ENCODE measurements at regions of chr4 and their contacts with region 1.

Region 1: DNA sequence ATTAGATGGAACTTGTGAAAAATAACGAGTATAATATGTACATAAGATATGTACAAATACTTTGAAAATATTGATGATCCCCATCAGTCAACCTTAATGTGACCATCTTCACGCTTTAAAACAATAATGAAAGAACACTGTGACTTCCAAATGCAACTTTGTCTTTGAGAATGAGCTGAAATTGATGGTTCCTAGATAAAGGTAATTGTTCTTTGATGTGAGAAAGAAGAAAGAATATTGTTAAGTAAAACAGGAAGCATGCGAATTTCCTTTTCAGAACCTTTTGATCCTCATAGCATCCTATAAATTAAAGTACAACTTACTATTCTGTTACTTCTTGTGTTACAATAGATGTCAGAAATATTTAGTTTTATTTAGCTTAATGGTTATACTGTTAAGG is 22.2 kb downstream of the IL2 start:
- DNase-seq: no peak
- ATAC-seq: no peak
- H3K4me3 ChIP-seq: no peak overlapping the region
- H3K27ac ChIP-seq: no peak overlapping the region
- H3K4me1 ChIP-seq: no peaks in the 10 kb centered on the region
- H3K27me3 ChIP-seq: no peaks in the 10 kb centered on the region
- CTCF ChIP-seq: no peak

Region 2: DNA sequence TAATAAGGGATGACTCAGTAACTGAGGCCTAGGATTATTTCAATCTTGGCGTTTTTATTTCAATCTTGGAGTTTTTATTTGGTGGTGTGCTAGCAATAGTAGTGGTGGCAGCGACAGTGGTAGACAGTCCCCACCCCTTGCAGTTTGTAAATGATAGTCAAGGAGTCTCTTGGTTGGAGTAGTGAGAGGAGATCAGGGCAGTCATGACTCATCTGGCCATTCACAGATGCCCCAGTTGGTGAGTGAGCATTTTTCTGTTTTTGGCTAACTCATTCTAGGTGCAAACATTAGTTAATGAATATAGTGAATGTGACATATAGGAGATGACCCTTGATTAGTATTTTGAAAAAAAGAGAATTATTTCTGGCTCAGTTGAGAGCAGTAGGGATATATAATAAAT is 149.0 kb before region 1 on chr4:
- intact Hi-C with region 1: no loop called
- DNase-seq: no peak
- ATAC-seq: no peak
- H3K4me3 ChIP-seq: no peak overlapping the region
- H3K27ac ChIP-seq: no peak overlapping the region
- H3K4me1 ChIP-seq: no peaks in the 10 kb centered on the region
- H3K27me3 ChIP-seq: no peaks in the 10 kb centered on the region
- CTCF ChIP-seq: no peak

Region 3: GRCh38 chr4:122356317-122356808 is 77.9 kb before region 1 on chr4:
- intact Hi-C with region 1: no loop called
- DNase-seq: no peak
- ATAC-seq: no peak
- H3K4me3 ChIP-seq: no peak overlapping the region
- H3K27ac ChIP-seq: no peak overlapping the region
- H3K4me1 ChIP-seq: no peaks in the 10 kb centered on the region
- H3K27me3 ChIP-seq: no peaks in the 10 kb centered on the region
- CTCF ChIP-seq: no peak

Region 4: DNA sequence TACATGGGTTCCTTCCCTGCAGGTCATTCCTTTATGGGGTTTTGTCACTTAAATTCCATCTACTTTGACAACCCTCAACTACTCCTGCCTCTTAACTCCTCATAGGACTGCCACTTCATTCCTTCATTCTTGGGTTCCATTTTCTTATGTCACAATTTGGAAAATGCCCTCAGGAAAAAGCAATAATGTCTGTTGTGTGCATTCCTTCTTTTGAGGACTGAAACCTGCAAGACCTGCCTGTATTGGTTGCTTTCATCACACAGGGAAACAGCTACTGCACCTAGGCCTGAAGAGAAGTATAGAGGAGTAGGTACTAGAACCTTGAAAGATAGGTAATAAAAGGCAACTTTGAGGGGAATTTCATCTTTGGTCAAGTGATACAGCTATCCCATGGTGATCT is 14.7 kb after region 1 on chr4:
- intact Hi-C with region 1: no loop called
- DNase-seq: no peak
- ATAC-seq: no peak
- H3K4me3 ChIP-seq: no peak overlapping the region
- H3K27ac ChIP-seq: no peak overlapping the region
- H3K4me1 ChIP-seq: no peaks in the 10 kb centered on the region
- H3K27me3 ChIP-seq: no peaks in the 10 kb centered on the region
- CTCF ChIP-seq: no peak

Region 5: DNA sequence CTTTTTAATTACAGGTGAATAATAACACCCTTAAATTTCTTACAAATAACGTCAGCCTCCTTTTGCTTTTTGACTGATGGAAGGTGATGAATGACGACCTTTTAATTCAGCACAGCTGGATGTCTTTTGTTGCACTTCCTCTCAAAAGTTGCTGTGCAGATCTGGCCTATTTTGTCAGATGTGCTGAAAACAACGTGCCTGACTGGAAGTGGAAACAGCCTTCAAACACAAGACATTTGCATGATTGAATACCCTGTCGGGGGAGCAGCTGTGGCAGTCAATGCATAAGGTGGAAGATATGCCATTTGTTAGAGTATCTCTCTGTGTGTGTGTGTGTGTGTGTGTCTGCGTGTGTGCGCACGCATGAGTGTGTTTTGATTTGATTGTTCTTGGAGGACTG is 1542.0 kb after region 1 on chr4:
- intact Hi-C with region 1: loop called in 1 of 10 experiments (anchors 5 kb)
- DNase-seq: no peak
- ATAC-seq: peak in 6 of 8 donors; percentile 23 to 69 (median 64)
- H3K4me3 ChIP-seq: no peak overlapping the region
- H3K27ac ChIP-seq: peak overlapping the region in 9 of 10 donors; percentile 12 to 61 (median 27)
- H3K4me1 ChIP-seq: peaks cover 0 to 31% (median 10%) of the 10 kb centered on the region in 9 donors
- H3K27me3 ChIP-seq: no peaks in the 10 kb centered on the region
- CTCF ChIP-seq: no peak